ENCODE measurements at regions of chr11 and their contacts with region 1.

Region 1: GRCh38 chr11:115900111-115900510 is 395.9 kb upstream of the CADM1 start:
- DNase-seq: no peak
- CTCF ChIP-seq: no peak

Region 2: DNA sequence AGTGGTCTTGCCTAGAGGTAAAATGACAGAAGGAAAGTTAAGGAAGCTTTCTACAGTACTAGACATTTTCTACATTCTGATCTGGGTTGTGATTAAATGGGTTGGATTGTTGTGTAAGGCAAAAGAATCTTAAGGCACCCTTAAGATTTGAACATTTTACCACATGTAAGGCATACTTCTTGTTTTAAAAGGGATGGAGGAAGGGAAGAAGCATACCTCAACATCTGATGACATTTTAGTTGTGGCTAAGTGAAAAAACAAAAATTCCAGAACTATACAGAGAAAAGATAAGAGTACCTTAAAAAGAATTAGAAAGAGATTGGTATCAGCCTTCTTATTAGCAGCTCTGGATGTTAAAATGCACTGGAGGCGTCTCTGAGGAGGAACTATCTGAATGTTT is 39.9 kb before region 1 on chr11:
- CTCF ChIA-PET with region 1: no interaction called
- POLR2A ChIA-PET with region 1: no interaction called
- DNase-seq: no peak
- CTCF ChIP-seq: no peak

Region 3: GRCh38 chr11:115912484-115912945 is 12.4 kb after region 1 on chr11:
- CTCF ChIA-PET with region 1: interaction called, 25 read pairs
- POLR2A ChIA-PET with region 1: no interaction called
- DNase-seq: peak; percentile 29
- CTCF ChIP-seq: peak; percentile 40

Region 4: DNA sequence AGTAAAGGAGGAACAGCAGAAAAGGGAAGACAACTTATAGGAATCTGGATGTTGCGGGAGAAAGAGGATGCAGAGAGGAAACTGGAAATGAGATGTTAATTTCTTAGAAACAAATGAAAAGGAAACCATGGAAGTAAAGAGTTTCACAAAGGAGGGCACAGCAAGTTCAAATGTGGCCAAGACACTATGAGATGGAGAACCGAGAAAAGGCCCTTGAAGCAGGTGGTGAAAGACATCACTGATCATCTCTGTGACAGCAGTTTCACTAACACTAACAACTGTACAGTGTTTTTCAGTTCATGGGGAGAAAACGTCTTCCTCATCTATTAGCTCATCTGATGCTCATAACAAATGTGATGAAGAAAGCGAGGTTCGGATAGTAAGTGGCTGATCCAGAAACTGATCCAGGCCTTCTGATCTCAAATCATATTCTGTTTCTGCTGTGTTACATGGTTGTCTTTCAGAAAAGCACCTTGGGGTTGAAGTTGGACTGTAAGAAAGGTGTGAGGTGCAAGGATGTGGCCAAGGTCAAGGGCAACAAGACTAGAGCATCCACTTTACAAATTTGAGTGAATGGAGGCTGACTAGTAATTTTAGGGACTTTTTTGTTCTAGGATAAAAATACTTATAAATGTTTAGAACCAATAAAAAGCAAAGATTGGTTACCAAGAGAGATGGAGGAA is 96.2 kb after region 1 on chr11:
- CTCF ChIA-PET with region 1: no interaction called
- POLR2A ChIA-PET with region 1: no interaction called
- DNase-seq: peak; percentile 78
- CTCF ChIP-seq: no peak

Measured in GM10248 (cell line).